ENCODE measurements at regions of chr9 and their contacts with region 1.

Region 1: DNA sequence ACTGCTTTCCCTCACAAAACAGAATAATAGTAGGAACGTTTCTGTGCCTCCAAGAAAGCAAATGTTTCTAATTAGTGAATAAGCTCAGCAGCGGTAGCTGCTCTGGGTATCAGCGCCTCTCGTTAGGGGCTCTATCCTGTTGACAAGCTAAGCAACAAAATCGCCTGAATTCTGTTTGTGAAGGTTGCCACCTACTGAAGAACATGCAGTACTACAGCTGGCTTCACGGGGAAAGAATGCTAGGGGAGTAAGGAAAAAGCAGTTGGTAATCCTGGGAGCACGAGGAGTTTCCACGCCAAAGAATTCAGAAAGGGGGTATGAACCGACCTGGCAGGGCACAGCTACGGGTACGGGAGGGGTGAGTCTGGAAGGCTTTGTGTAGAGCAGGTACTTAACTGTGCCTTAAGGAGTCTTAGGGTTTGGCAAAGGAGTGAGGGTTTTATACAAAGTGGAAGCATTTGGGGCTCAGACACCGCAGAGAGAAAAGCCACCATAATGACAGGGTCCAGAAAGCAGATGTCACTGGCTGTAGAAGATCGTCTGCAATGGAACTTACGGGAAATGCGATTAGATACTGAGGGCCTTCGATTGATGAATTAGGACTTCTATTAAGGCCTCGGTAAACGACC is 171.7 kb downstream of the TTC39B start:
- DNase-seq: peak; percentile 58
- H3K4me3 Mint-ChIP-seq: no peak overlapping the region
- H3K27ac Mint-ChIP-seq: no peak overlapping the region
- H3K4me1 Mint-ChIP-seq: peaks cover 1% of the 10 kb centered on the region
- H3K27me3 Mint-ChIP-seq: no peaks in the 10 kb centered on the region

Region 2: GRCh38 chr9:14466429-14466818 is 668.9 kb before region 1 on chr9:
- CTCF ChIA-PET with region 1: no interaction called
- intact Hi-C with region 1: loop called (anchors 10 kb)
- DNase-seq: no peak
- H3K4me3 Mint-ChIP-seq: no peak overlapping the region
- H3K27ac Mint-ChIP-seq: no peak overlapping the region
- H3K4me1 Mint-ChIP-seq: no peaks in the 10 kb centered on the region
- H3K27me3 Mint-ChIP-seq: no peaks in the 10 kb centered on the region

Region 3: DNA sequence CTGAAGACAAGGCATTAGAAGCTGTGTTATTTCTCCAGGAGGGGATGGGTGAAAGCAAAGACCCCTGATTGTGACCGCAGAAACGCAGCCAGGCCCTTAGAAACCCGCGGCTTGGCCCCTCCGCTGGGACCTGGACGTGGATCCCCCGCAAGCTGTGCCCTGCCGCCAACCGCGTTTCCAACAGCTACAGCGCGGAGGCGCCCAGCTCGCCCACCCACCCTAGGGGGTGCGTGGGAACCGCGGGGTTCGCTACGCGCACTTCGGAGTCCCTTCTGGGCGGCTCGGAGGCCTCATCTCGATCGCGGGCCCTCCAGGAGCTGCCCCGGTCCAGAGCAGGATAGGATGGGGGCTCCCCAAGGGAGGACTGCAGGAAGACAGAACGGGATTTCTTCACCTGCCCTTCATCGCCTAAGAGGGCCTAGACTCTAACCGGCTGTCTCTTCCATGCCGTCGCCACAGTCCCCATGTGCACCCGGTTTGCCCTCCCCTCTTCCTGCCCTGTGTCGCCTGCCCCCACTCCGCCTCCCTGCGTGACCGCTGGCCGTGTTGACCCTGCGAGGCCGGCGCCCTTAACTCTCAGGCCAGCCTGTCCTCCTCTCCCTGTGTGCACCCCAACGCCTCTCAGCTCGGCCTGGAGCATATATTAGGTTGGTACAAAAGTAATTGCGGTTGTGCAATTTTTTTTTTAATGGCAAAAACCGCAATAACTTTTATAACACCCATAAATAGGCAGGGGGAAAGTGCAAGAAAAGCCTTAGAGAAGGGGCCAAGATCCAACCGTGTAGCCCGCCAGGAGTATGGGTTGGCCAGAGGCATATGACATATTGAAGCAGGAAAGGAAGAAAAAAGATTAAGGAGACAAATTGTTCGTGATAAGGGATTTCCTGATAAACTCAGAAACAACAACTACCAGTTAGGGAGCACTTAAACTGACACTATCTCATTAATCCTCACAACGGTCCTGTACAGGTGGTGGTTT is 157.0 kb before region 1 on chr9:
- CTCF ChIA-PET with region 1: no interaction called
- intact Hi-C with region 1: no loop called
- DNase-seq: no peak
- H3K4me3 Mint-ChIP-seq: no peak overlapping the region
- H3K27ac Mint-ChIP-seq: no peak overlapping the region
- H3K4me1 Mint-ChIP-seq: no peaks in the 10 kb centered on the region
- H3K27me3 Mint-ChIP-seq: no peaks in the 10 kb centered on the region

Region 4: GRCh38 chr9:15116130-15116580 is 19.1 kb before region 1 on chr9:
- CTCF ChIA-PET with region 1: interaction called, 10 read pairs
- intact Hi-C with region 1: no loop called
- DNase-seq: no peak
- H3K4me3 Mint-ChIP-seq: no peak overlapping the region
- H3K27ac Mint-ChIP-seq: no peak overlapping the region
- H3K4me1 Mint-ChIP-seq: peaks cover 6% of the 10 kb centered on the region
- H3K27me3 Mint-ChIP-seq: no peaks in the 10 kb centered on the region